ENCODE measurements at regions of chr21 and their contacts with region 1.

Region 1: DNA sequence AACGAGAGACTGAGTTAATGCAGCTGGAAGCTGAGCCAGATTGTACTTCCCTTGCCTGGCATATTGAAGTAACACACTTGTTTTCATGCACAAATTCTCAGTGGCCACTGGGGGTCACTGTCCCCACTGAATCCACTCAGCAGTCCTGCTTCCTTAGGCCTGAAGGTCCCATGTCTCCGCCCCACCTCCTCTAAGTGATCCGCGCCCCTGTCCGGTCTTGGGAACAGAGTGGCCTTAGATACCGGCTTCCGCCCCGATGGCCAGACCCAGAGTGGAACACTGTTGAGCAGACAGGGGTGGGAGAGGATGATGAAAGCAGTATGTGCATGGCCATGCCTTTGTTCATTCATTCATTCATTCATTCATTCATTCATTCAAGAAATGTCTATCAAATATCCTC is 34.8 kb downstream of the CHAF1B start:
- DNase-seq: peak; percentile 51
- H3K4me3 ChIP-seq: no peak overlapping the region
- CTCF ChIP-seq: peak; percentile 83

Region 2: DNA sequence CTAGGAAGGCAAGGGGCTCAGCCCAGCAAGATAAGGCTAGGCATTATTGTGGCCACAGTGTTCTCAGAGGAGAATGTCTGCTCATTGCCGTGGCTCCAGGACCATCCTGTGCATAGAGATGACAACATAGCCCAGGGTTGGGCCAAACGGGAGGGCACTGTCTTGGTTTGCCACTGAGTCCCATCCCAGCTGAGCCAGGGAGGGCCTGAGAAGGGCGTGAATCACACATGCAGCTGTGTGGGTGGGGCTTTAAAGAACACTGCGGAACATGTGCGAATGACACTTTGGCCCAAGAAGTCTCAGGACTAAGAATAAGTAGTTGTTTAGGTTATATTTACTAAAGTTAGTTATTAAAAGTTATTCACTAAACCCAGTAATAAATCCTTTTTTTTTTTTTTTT is 16.3 kb before region 1 on chr21:
- CTCF ChIA-PET with region 1: interaction called, 12 read pairs
- POLR2A ChIA-PET with region 1: no interaction called
- DNase-seq: no peak
- H3K4me3 ChIP-seq: no peak overlapping the region
- CTCF ChIP-seq: no peak

Region 3: GRCh38 chr21:36429947-36430546 is 10.1 kb after region 1 on chr21:
- CTCF ChIA-PET with region 1: interaction called, 28 read pairs
- POLR2A ChIA-PET with region 1: no interaction called
- DNase-seq: peak; percentile 91
- H3K4me3 ChIP-seq: peak overlapping the region; percentile 43
- CTCF ChIP-seq: peak; percentile 18

Region 4: GRCh38 chr21:36478207-36478701 is 58.3 kb after region 1 on chr21:
- CTCF ChIA-PET with region 1: interaction called, 16 read pairs
- POLR2A ChIA-PET with region 1: no interaction called
- DNase-seq: peak; percentile 72
- H3K4me3 ChIP-seq: peak overlapping the region; percentile 20
- CTCF ChIP-seq: no peak

Measured in AG04449 (cell line).